ENCODE measurements at regions of chrX and their contacts with region 1.

Region 1: GRCh38 chrX:47217642-47218279 is 720 bp upstream of the CDK16 start:
- DNase-seq: peak; percentile 98 to 100
- H3K4me3 ChIP-seq: peak overlapping the region; percentile 87 to 92
- H3K27ac ChIP-seq: peak overlapping the region; percentile 95 to 97
- H3K4me1 ChIP-seq: peaks cover 3 to 14% of the 10 kb centered on the region in 2 donors
- H3K27me3 ChIP-seq: no peaks in the 10 kb centered on the region
- CTCF ChIP-seq: no peak

Region 2: GRCh38 chrX:47233337-47234113 is 15.8 kb after region 1 on chrX:
- intact Hi-C with region 1: loop called (anchors 1 kb)
- DNase-seq: peak; percentile 96 to 97
- H3K4me3 ChIP-seq: peak overlapping the region; percentile 56 to 88
- H3K27ac ChIP-seq: peak overlapping the region; percentile 89 to 98
- H3K4me1 ChIP-seq: peaks cover 0 to 3% of the 10 kb centered on the region in 2 donors
- H3K27me3 ChIP-seq: no peaks in the 10 kb centered on the region
- CTCF ChIP-seq: no peak

Measured in ascending aorta (tissue), 2 donors.